CD8-positive, alpha-beta T cell (primary cell): ENCODE measurements at regions of chrX and their contacts with region 1.

Region 1: DNA sequence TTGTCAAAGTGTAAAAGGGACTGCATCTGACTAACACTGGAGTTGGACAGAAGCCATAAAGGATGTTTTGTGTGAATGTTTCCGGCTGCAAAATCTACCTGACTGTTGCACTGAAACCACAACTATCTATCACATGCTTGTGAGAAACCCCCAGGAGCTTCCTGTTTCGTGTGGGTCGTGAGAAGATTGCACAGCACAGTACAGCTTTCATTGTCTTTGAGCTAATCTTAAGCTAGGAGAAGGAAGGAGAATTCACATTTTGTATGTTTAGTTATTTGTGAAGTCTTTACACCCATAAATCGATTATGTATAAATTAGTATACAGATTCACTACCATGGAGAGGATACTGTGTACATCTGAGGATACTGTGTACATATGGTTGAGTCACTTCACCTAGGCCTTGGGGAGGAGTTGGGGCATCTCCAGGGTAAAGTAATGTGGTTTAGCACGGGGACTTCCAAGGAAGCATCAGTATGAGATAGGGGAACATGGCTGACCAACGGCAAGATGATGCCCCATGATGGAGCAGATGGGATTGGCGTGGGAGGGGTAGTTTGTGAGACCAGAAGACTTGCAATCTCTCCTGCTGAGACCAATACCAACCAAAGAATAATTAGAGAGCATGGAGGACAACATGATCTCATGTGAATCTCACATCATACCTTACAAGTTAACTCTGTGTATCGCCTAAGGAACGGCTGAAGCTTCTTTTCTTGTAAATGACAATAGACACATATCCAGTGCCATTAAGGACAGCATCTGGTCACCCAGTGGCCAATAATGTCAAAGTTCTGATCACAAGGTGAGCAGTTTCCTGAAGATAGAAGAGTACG is 43.1 kb upstream of the FAM9C start:
- DNase-seq: peak in 7 of 9 experiments; percentile 41 to 94 (median 75)
- ATAC-seq: peak; percentile 60
- H3K4me3 ChIP-seq: peak overlapping the region in 1 of 2 experiments; percentile 10
- H3K4me3 Mint-ChIP-seq: peak overlapping the region; percentile 80
- H3K27ac ChIP-seq: peak overlapping the region; percentile 57 to 96
- H3K27ac Mint-ChIP-seq: peak overlapping the region; percentile 98
- H3K4me1 ChIP-seq: peaks cover 90% of the 10 kb centered on the region
- H3K4me1 Mint-ChIP-seq: peaks cover 84% of the 10 kb centered on the region
- H3K27me3 ChIP-seq: no peaks in the 10 kb centered on the region
- H3K27me3 Mint-ChIP-seq: no peaks in the 10 kb centered on the region
- CTCF ChIP-seq: no peak

Region 2: DNA sequence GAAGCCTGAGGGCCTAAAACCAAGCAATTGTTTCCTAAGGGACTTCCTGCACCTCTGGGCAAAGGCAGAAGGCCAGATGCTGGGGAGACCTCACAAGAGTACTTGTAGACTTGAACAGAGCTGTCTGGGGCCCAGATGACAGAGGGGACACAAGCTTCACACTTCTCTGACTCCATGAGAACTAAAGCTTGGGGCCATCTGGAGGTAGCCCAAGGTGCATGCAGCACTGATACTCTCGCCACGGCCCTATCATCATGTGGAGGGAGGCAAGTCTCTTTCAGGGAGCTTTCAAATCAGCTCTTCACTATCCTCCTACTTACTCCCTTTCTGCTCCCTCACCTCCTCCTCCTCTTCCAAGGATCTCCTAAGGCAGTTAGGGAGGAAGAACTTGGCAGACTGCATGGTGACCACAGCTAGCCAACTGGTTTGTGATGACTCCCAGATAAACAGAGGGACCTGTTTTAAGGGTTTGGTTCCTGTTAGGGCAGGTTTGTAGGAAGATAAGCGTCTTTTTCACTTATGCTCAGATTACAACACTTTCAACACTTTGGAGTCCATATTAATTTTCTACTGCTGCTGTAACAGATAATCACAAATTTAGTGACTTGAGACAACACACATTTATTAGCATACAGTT is 1305.7 kb before region 1 on chrX:
- CTCF ChIA-PET with region 1: no interaction called
- POLR2A ChIA-PET with region 1: no interaction called
- intact Hi-C with region 1: no loop called
- DNase-seq: no peak
- ATAC-seq: no peak
- H3K4me3 ChIP-seq: no peak overlapping the region
- H3K4me3 Mint-ChIP-seq: no peak overlapping the region
- H3K27ac ChIP-seq: no peak overlapping the region
- H3K27ac Mint-ChIP-seq: no peak overlapping the region
- H3K4me1 ChIP-seq: no peaks in the 10 kb centered on the region
- H3K4me1 Mint-ChIP-seq: peaks cover 8% of the 10 kb centered on the region
- H3K27me3 ChIP-seq: no peaks in the 10 kb centered on the region
- H3K27me3 Mint-ChIP-seq: no peaks in the 10 kb centered on the region
- CTCF ChIP-seq: no peak

Region 3: DNA sequence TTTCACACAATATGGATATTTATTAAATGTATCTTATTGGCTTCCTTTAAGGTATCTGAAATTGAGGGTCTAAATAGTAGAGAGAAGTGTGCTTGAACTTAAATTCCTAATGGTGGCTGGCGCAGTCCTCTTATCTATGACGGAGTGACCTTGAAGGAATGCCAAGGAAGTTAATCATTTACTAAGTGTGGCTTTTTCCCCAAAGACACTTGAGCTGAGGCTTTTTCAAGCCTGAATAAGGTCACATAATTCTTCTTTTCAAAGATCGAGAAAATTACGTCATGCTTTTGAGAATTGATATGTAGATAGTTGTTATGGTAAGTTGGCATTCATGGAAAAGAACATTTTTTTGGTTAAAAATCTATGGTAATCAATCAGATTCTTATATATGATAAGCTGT is 308.0 kb before region 1 on chrX:
- CTCF ChIA-PET with region 1: no interaction called
- POLR2A ChIA-PET with region 1: no interaction called
- intact Hi-C with region 1: no loop called
- DNase-seq: no peak
- ATAC-seq: no peak
- H3K4me3 ChIP-seq: no peak overlapping the region
- H3K4me3 Mint-ChIP-seq: no peak overlapping the region
- H3K27ac ChIP-seq: no peak overlapping the region
- H3K27ac Mint-ChIP-seq: no peak overlapping the region
- H3K4me1 ChIP-seq: no peaks in the 10 kb centered on the region
- H3K4me1 Mint-ChIP-seq: no peaks in the 10 kb centered on the region
- H3K27me3 ChIP-seq: no peaks in the 10 kb centered on the region
- H3K27me3 Mint-ChIP-seq: no peaks in the 10 kb centered on the region
- CTCF ChIP-seq: no peak

Region 4: GRCh38 chrX:12946838-12947544 is 140.5 kb before region 1 on chrX:
- CTCF ChIA-PET with region 1: interaction called, 48 read pairs
- POLR2A ChIA-PET with region 1: interaction called, 25 read pairs
- intact Hi-C with region 1: loop called (anchors 1 to 2 kb)
- DNase-seq: peak; percentile 45 to 87 (median 75)
- ATAC-seq: peak; percentile 28
- H3K4me3 ChIP-seq: no peak overlapping the region
- H3K4me3 Mint-ChIP-seq: peak overlapping the region; percentile 60
- H3K27ac ChIP-seq: peak overlapping the region; percentile 17 to 94
- H3K27ac Mint-ChIP-seq: peak overlapping the region; percentile 98
- H3K4me1 ChIP-seq: peaks cover 44% of the 10 kb centered on the region
- H3K4me1 Mint-ChIP-seq: peaks cover 58% of the 10 kb centered on the region
- H3K27me3 ChIP-seq: no peaks in the 10 kb centered on the region
- H3K27me3 Mint-ChIP-seq: no peaks in the 10 kb centered on the region
- CTCF ChIP-seq: peak; percentile 77

Region 5: DNA sequence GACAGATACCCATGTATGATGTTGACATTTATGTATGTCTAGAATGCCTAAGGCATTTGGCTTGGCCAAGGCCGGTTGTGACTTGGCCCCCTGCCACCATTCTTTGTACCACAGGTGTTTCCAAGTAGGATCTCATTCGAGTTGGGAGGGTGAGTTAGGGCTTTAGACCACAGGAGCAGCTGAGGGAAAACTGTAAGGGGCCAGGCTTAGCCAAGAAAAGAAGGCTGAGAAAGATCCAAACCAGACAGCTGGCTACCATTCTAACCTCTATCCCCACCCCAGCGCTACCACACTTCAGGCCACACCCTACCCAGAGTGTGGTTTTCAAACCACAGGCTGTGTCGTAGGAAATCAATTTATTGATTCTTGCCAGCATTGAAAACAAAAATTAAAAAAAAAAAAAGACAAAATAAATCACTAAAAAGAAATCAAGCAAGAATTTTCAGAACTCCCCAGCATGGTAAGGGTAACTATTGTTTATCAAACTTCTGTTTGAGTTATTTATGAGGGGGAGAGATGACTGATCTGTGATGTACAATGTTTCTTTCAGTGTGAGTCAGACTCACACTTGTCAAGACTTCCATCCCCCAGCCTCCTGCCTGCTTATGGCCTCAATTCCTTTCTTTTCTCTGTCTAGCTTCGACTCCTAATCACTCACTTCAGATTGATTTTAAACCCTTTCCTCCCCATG is 102.8 kb before region 1 on chrX:
- CTCF ChIA-PET with region 1: interaction called, 66 read pairs
- POLR2A ChIA-PET with region 1: interaction called, 518 read pairs
- intact Hi-C with region 1: no loop called
- DNase-seq: peak in 6 of 9 experiments; percentile 50 to 76 (median 60)
- ATAC-seq: peak; percentile 74
- H3K4me3 ChIP-seq: peak overlapping the region in 1 of 2 experiments; percentile 20
- H3K4me3 Mint-ChIP-seq: peak overlapping the region; percentile 78
- H3K27ac ChIP-seq: peak overlapping the region; percentile 62 to 72
- H3K27ac Mint-ChIP-seq: peak overlapping the region; percentile 99
- H3K4me1 ChIP-seq: peaks cover 69% of the 10 kb centered on the region
- H3K4me1 Mint-ChIP-seq: peaks cover 72% of the 10 kb centered on the region
- H3K27me3 ChIP-seq: no peaks in the 10 kb centered on the region
- H3K27me3 Mint-ChIP-seq: no peaks in the 10 kb centered on the region
- CTCF ChIP-seq: no peak

Region 6: GRCh38 chrX:13013363-13014110 is 74.0 kb before region 1 on chrX:
- CTCF ChIA-PET with region 1: interaction called, 7 read pairs
- POLR2A ChIA-PET with region 1: interaction called, 19 read pairs
- intact Hi-C with region 1: no loop called
- DNase-seq: peak in 2 of 9 experiments; percentile 30 to 65
- ATAC-seq: peak; percentile 78
- H3K4me3 ChIP-seq: peak overlapping the region; percentile 14 to 18
- H3K4me3 Mint-ChIP-seq: peak overlapping the region; percentile 47
- H3K27ac ChIP-seq: peak overlapping the region; percentile 47 to 84
- H3K27ac Mint-ChIP-seq: peak overlapping the region; percentile 95
- H3K4me1 ChIP-seq: peaks cover 42% of the 10 kb centered on the region
- H3K4me1 Mint-ChIP-seq: peaks cover 57% of the 10 kb centered on the region
- H3K27me3 ChIP-seq: no peaks in the 10 kb centered on the region
- H3K27me3 Mint-ChIP-seq: no peaks in the 10 kb centered on the region
- CTCF ChIP-seq: no peak

Region 7: GRCh38 chrX:13051529-13052172 is 35.9 kb before region 1 on chrX:
- CTCF ChIA-PET with region 1: interaction called, 11 read pairs
- POLR2A ChIA-PET with region 1: interaction called, 26 read pairs
- intact Hi-C with region 1: loop called (anchors 1 to 5 kb)
- DNase-seq: peak in 8 of 9 experiments; percentile 17 to 80 (median 54)
- ATAC-seq: peak; percentile 81
- H3K4me3 ChIP-seq: no peak overlapping the region
- H3K4me3 Mint-ChIP-seq: peak overlapping the region; percentile 50
- H3K27ac ChIP-seq: peak overlapping the region; percentile 39 to 74
- H3K27ac Mint-ChIP-seq: peak overlapping the region; percentile 95
- H3K4me1 ChIP-seq: peaks cover 79% of the 10 kb centered on the region
- H3K4me1 Mint-ChIP-seq: peaks cover 72% of the 10 kb centered on the region
- H3K27me3 ChIP-seq: no peaks in the 10 kb centered on the region
- H3K27me3 Mint-ChIP-seq: no peaks in the 10 kb centered on the region
- CTCF ChIP-seq: no peak

Region 8: GRCh38 chrX:13734278-13735172 is 647.0 kb after region 1 on chrX and contains the starts of genes OFD1 and TRAPPC2:
- CTCF ChIA-PET with region 1: no interaction called
- POLR2A ChIA-PET with region 1: no interaction called
- intact Hi-C with region 1: loop called in 1 of 2 experiments (anchors 10 kb)
- DNase-seq: peak; percentile 75 to 95 (median 90)
- ATAC-seq: peak; percentile 84
- H3K4me3 ChIP-seq: peak within 1 kb of the TSS; percentile 62 to 92
- H3K4me3 Mint-ChIP-seq: peak within 1 kb of the TSS; percentile 97
- H3K27ac ChIP-seq: peak within 1 kb of the TSS; percentile 93 to 99
- H3K27ac Mint-ChIP-seq: peak within 1 kb of the TSS; percentile 99
- H3K4me1 ChIP-seq: peaks cover 46% of the 10 kb centered on the region
- H3K4me1 Mint-ChIP-seq: peaks cover 54% of the 10 kb centered on the region
- H3K27me3 ChIP-seq: no peaks in the 10 kb centered on the region
- H3K27me3 Mint-ChIP-seq: no peaks in the 10 kb centered on the region
- CTCF ChIP-seq: no peak
- total RNA-seq, gene OFD1: 49.2 to 56.7 TPM
- total RNA-seq, gene TRAPPC2: 20.5 to 24.6 TPM